ENCODE measurements at regions of chr14 and their contacts with region 1.

Region 1: DNA sequence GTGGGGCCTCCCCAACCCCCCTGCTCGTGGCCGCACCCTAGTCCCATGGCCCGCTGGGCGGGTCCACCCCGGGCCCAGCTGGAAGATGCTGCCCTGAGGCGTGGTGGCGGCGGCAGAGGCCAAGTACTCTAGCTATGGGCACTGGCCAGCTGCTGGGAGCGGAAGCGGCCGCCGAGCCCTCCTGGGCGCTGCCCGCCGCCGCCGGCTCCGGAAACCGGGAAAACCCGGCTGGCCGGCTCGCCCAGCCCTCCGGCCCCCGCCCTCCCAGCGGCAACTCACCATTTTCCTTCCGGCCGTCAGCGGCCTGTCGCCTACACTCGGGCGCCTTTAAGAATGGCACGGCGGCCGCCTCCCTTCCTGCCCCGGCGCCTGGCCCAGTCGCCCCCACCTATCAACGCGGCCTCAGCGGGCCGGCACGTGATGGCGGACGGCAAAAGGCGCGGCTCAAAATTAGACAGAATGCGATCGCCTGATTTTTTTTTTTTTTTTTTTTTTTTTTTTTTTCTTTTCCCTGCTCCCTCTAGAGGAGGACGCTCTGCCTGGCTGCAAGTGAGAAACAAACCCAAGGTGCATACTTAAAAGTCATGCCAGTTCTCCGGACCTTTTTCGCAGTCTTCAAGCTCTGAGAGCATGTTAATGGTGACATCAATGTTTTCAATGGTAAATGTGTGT is at the start of gene GMFB:
- DNase-seq: peak; percentile 95 to 97
- ATAC-seq: peak; percentile 99
- H3K4me3 ChIP-seq: peak within 1 kb of the TSS; percentile 99
- H3K27ac ChIP-seq: peak within 1 kb of the TSS; percentile 97
- H3K4me1 ChIP-seq: peaks cover 15% of the 10 kb centered on the region
- H3K27me3 ChIP-seq: peaks cover 0 to 1% (median 0%) of the 10 kb centered on the region in 3 donors
- CTCF ChIP-seq: peak; percentile 38
- total RNA-seq, gene GMFB: 11.5 to 14.6 (median 13.8) TPM

Region 2: GRCh38 chr14:54509546-54510501 is 21.0 kb after region 1 on chr14 and contains the start of gene CGRRF1:
- intact Hi-C with region 1: loop called in 1 of 2 experiments (anchors 1 kb)
- DNase-seq: peak; percentile 99
- ATAC-seq: peak; percentile 97 to 99 (median 98)
- H3K4me3 ChIP-seq: peak within 1 kb of the TSS; percentile 91
- H3K27ac ChIP-seq: peak within 1 kb of the TSS; percentile 83
- H3K4me1 ChIP-seq: peaks cover 24% of the 10 kb centered on the region
- H3K27me3 ChIP-seq: no peaks in the 10 kb centered on the region
- CTCF ChIP-seq: peak; percentile 63
- total RNA-seq, gene CGRRF1: 14.1 to 25.8 (median 22.7) TPM